HEK293 (cell line): ENCODE measurements at regions of chr5 and their contacts with region 1.

Region 1: GRCh38 chr5:119411935-119412602 is 40.2 kb upstream of the HSD17B4 start:
- H3K4me3 ChIP-seq: peak overlapping the region; percentile 56
- H3K27ac ChIP-seq: peak overlapping the region; percentile 28; the same call in 1 of the 2 replicates
- H3K4me1 ChIP-seq: no peaks in the 10 kb centered on the region
- CTCF ChIP-seq: peak; percentile 73

Region 2: GRCh38 chr5:118987988-118988865 is 423.8 kb before region 1 on chr5 and contains the start of gene DTWD2:
- CTCF ChIA-PET with region 1: interaction called, 87 read pairs
- POLR2A ChIA-PET with region 1: interaction called, 5 read pairs
- H3K4me3 ChIP-seq: peak within 1 kb of the TSS; percentile 93
- H3K27ac ChIP-seq: peak within 1 kb of the TSS; percentile 91
- H3K4me1 ChIP-seq: peaks cover 2% of the 10 kb centered on the region; the same call in 1 of the 2 replicates
- CTCF ChIP-seq: peak; percentile 97

Region 3: DNA sequence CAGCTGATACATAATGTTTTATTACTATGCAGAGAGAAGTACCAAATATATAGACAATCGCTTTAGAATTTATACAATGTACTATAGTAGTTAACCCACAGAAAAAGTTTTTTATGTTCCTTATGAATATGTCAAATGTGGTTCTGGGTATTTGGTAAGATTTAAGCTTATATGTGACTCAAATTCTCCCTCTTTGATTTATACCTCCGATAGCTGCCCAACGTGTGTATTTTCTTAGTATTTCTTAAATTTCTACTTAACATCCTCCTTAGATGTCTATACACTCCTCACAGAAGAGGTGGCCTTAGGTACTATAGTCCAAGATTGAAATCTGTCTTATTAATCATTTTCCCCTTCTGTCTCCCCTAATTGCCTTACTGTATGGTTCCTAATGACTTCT is 194.9 kb before region 1 on chr5:
- CTCF ChIA-PET with region 1: interaction called, 12 read pairs
- POLR2A ChIA-PET with region 1: no interaction called
- H3K4me3 ChIP-seq: no peak overlapping the region
- H3K27ac ChIP-seq: no peak overlapping the region
- H3K4me1 ChIP-seq: peaks cover 4% of the 10 kb centered on the region; the same call in 1 of the 2 replicates
- CTCF ChIP-seq: no peak

Region 4: DNA sequence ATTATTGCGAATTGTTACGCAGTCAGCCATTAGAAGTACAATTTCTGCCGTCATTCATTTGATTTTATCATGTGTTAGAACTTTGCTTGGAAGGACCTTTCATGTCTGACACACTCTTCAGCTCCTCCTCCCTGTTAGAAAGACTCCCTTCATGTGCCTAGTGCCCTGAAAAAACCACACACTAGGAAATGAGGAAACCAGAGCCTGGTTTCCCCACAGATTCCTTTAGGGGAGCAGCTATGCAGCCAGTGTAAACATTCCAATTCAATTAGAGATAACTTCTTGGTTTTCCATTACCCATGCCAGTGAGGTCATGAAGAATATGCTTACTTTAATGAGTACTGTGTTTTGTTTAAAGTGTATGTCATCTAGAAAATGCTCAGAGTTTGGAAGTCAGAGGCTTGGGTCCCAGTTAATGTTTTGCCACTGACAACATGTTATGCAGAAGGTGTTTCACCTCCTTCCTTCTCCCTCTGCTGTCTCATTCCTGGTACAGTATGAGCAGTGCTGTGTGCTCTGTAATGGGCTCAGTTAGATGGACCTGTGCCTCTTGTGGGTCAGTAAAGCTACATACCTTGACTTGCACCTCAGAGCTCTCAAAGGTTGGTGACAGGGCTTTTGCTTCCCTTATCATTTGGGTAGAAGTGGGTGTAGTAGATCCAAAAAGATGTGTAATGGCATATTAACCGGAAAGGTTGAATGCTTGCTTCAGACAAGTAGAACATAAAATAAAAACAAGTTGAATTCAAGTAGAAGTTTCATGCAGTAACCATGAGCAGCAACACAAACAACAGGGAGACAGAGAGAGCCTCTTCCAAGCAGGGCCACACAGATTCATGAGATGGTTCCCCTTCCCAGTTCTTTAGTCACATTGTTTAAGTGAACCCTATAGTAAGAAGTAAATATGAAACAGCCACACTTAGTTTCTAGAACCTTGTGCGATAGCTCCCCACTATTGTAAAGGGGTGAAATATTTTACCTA is 108.9 kb before region 1 on chr5:
- CTCF ChIA-PET with region 1: interaction called, 10 read pairs
- POLR2A ChIA-PET with region 1: no interaction called
- H3K4me3 ChIP-seq: no peak overlapping the region
- H3K27ac ChIP-seq: peak overlapping the region; percentile 40
- H3K4me1 ChIP-seq: peaks cover 30% of the 10 kb centered on the region
- CTCF ChIP-seq: peak; percentile 50; the same call in 1 of the 2 replicates

Region 5: GRCh38 chr5:119336845-119337580 is 75.1 kb before region 1 on chr5:
- CTCF ChIA-PET with region 1: interaction called, 21 read pairs
- POLR2A ChIA-PET with region 1: no interaction called
- H3K4me3 ChIP-seq: no peak overlapping the region
- H3K27ac ChIP-seq: no peak overlapping the region
- H3K4me1 ChIP-seq: peaks cover 14% of the 10 kb centered on the region
- CTCF ChIP-seq: no peak

Region 6: GRCh38 chr5:119373449-119373858 is 38.6 kb before region 1 on chr5:
- CTCF ChIA-PET with region 1: interaction called, 12 read pairs
- POLR2A ChIA-PET with region 1: no interaction called
- H3K4me3 ChIP-seq: no peak overlapping the region
- H3K27ac ChIP-seq: no peak overlapping the region
- H3K4me1 ChIP-seq: peaks cover 3% of the 10 kb centered on the region
- CTCF ChIP-seq: no peak

Region 7: DNA sequence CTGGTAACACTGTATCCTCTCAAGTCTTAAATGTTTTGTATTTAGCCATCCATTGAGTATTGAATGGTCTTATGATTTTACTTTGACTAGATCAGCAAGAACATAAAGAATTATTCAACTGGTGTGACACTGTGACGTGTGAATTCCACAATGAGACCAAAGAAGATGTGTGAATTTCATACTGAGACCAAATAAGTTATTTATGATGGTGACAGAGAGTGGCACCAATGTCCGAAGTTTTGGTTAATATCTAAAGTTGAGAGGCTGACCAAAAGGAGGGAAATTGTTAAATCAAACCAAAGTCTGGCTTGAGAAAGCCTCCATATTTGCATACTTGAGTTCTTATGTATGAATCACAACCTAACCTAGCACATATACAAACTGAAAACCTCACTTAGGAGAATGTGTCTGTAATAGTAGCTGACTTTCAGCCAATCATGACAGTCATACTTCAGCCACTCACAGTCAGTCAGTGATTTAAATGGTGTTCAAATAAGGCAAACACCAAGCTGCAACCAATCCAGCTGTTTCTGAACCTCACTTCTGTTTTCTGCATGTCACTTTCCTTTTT is 185.7 kb after region 1 on chr5:
- CTCF ChIA-PET with region 1: no interaction called
- POLR2A ChIA-PET with region 1: no interaction called
- H3K4me3 ChIP-seq: no peak overlapping the region
- H3K27ac ChIP-seq: no peak overlapping the region
- H3K4me1 ChIP-seq: no peaks in the 10 kb centered on the region
- CTCF ChIP-seq: no peak